Calu3 (cell line): ENCODE measurements at regions of chr7 and their contacts with region 1.

Region 1: DNA sequence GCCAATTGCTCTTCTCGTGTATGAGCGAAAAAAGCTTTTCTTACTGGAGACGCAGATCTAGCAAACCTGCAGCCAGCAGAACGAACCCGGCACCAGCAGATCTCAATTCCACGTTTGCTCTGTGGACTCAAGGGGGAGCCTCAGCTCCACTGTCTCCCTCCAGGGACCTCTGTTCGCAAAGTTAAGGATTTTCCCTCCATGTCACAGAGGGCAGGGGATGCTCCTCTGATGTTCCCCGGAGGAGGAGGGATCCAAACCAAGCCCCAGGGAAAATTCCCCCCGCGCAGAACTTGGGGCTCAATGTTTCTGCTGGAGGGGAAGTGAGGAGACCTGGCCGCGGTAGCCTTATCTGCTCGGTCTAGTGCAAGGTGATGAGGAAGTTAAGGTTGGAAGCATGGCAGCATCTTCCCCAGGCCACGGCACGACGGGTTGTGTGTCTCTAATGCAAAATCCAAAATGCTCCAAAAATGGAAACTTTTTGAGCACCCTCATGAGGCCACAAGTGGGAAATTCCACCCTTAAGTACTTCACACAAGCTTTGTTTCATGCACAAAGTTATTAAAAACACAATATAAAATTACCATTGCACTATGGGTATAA is 9.0 kb downstream of the IQCE start:
- DNase-seq: peak; percentile 30
- H3K4me3 Mint-ChIP-seq: no peak overlapping the region
- H3K27ac Mint-ChIP-seq: no peak overlapping the region
- H3K4me1 Mint-ChIP-seq: peaks cover 65% of the 10 kb centered on the region
- H3K27me3 Mint-ChIP-seq: no peaks in the 10 kb centered on the region
- CTCF ChIP-seq: peak; percentile 33

Region 2: DNA sequence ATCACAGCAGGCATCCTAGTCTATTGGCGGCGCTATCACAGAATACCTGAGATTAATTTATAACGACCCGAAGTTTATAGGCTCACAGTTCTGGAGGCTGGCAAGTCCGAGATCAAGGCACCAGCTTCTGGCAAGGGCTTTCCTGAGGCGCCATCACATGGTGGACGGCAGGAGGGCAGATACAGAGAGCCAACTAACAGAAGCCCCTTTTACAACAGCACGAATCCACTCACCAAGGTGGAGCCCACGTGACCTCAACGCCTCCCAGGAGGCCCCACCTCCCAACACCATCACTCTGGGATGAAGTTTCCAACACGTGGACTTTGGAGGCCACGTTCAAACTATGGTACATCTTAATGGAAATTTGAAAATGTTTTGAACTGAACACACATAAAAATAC is 642.4 kb before region 1 on chr7:
- CTCF ChIA-PET with region 1: no interaction called
- intact Hi-C with region 1: no loop called
- DNase-seq: no peak
- H3K4me3 Mint-ChIP-seq: no peak overlapping the region
- H3K27ac Mint-ChIP-seq: no peak overlapping the region
- H3K4me1 Mint-ChIP-seq: peaks cover 8% of the 10 kb centered on the region
- H3K27me3 Mint-ChIP-seq: no peaks in the 10 kb centered on the region
- CTCF ChIP-seq: no peak

Region 3: GRCh38 chr7:2451171-2452073 is 116.4 kb before region 1 on chr7:
- CTCF ChIA-PET with region 1: interaction called, 14 read pairs
- intact Hi-C with region 1: no loop called
- DNase-seq: peak; percentile 99
- H3K4me3 Mint-ChIP-seq: peak overlapping the region; percentile 50
- H3K27ac Mint-ChIP-seq: peak overlapping the region; percentile 53
- H3K4me1 Mint-ChIP-seq: peaks cover 13% of the 10 kb centered on the region
- H3K27me3 Mint-ChIP-seq: no peaks in the 10 kb centered on the region
- CTCF ChIP-seq: peak; percentile 99

Region 4: DNA sequence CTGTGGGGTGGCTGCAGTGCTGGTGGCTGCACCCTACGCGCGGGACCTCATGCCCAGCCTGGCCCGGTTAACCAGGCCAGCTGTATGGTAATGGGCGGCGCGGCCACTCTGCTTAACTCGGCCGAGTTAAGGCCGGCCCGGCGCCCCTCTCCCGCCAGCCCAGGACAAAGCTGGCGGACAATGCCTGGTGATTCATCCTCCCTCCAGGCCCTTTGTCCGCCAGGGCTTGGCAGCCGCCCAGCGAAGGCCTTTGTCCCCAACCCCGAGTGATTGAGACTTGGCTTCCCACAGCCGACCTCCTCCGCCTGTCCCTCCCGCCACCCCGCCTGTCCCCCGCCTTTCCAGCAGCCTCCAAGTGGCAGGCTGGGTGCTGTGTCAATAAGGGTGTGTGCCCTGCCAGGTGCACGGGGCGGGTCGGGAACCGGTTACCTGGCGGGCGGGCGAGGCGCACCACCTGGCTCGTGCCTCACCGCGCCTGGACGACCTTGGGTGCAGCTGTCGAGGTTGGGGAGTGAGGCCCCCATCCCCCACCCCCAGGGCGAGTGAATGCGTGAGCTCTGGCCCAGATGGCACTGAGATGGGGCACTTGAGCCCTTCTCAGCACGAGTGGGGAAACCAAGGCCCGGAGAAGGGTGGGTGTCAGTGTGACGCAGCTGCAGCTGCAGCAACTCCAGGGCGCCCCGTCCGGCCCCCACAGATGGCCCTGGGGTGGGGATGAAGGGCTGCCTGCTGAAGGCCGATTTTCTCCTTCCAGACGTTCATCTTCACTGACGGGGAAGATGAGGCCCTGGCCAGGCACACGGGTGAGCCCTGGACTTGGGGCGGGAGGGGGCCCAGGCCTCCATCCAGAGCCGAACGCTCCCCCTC is 43.6 kb before region 1 on chr7:
- CTCF ChIA-PET with region 1: interaction called, 8 read pairs
- intact Hi-C with region 1: loop called (anchors 5 kb)
- DNase-seq: peak; percentile 99
- H3K4me3 Mint-ChIP-seq: peak overlapping the region; percentile 99
- H3K27ac Mint-ChIP-seq: peak overlapping the region; percentile 77
- H3K4me1 Mint-ChIP-seq: peaks cover 46% of the 10 kb centered on the region
- H3K27me3 Mint-ChIP-seq: no peaks in the 10 kb centered on the region
- CTCF ChIP-seq: no peak

Region 5: DNA sequence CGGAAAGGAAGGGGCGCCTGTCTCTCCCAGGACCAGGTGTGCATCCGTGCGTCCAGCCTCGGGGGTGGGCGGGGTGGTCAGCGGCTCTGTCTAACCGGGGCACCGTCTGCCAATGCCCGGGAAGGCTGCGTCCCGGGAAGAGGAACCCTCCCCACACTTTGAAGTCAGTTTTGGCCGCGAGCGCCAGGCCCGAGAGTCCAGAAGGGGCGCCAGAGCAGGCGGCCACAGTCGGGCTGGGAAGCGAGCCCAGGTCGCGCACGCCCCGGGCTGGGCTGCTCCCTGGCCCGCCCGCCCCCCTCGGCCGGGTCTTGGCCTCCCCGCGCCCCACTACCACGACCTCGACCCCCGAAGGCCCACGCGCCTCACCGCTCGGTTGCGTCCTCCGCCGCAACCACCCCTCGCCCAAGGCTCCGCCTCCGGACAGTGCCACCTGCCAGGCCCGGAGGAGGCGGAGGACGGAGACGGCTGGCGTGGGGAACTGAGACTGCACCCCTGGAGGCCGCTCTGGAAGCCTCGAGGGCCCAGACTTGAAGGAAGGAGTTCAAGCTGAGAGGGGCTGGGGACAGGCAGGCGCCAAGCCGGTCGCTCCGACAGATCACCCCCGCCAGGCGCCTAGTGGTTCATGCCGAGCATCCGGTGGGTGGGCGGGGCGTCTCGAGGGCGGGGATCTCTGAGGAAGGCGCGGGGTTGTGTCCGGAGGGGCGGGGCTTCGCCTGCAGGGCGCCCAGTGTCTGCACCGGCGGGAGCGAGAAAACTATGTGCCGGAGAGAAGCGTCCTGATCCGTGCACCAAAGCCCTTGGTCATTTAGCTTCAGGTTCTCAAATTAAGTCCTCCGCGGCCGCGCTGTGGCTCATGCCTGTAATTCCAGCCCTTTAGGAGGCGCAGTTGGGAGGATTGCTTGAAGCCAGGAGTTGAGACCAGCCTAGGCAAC is 12.4 kb before region 1 on chr7 and contains the start of gene BRAT1:
- CTCF ChIA-PET with region 1: interaction called, 32 read pairs
- intact Hi-C with region 1: no loop called
- DNase-seq: peak; percentile 99
- H3K4me3 Mint-ChIP-seq: peak within 1 kb of the TSS; percentile 93
- H3K27ac Mint-ChIP-seq: peak within 1 kb of the TSS; percentile 93
- H3K4me1 Mint-ChIP-seq: peaks cover 38% of the 10 kb centered on the region
- H3K27me3 Mint-ChIP-seq: no peaks in the 10 kb centered on the region
- CTCF ChIP-seq: peak; percentile 71
- total RNA-seq, gene BRAT1: 56.2 and 59.6 TPM in 2 replicates

Region 6: GRCh38 chr7:2632733-2633537 is 65.2 kb after region 1 on chr7:
- CTCF ChIA-PET with region 1: interaction called, 7 read pairs
- intact Hi-C with region 1: loop called (anchors 5 kb)
- DNase-seq: peak; percentile 73
- H3K4me3 Mint-ChIP-seq: peak overlapping the region; percentile 99
- H3K27ac Mint-ChIP-seq: peak overlapping the region; percentile 86
- H3K4me1 Mint-ChIP-seq: peaks cover 44% of the 10 kb centered on the region
- H3K27me3 Mint-ChIP-seq: no peaks in the 10 kb centered on the region
- CTCF ChIP-seq: no peak

Region 7: DNA sequence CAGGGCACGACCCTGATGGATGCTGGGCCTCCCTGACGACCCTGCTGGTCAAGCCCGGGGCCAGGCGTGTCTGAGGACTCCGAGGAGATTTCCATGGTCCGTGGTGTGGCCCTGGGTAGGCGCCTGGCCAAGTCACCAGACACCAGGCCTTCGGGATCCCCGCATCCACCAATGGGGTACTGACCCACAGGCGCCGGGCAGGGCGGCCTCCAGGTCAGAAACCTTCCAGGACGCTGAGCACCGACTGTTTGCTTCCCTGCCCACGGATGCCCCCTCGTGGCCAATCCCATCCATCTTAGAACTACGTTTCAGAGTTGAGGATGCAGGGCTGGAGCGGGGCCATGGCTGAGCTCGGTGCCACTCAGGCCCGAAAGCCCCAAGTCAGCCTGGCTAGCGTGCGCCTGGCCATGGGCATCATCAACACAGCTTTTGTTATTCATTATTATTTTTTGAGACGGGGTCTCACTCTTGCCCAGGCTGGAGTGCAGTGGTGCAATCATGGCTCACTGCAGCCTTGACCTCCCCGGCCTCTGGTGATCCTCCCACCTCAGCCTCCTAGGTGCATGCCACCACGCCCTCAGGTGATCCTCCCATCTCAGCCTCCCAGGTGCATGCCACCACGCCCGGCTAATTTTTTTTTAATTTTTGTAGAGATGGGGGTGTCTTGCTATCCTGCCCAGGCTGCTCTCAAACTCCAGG is 113.2 kb after region 1 on chr7:
- CTCF ChIA-PET with region 1: interaction called, 5 read pairs
- intact Hi-C with region 1: loop called (anchors 10 kb)
- DNase-seq: peak; percentile 95
- H3K4me3 Mint-ChIP-seq: no peak overlapping the region
- H3K27ac Mint-ChIP-seq: no peak overlapping the region
- H3K4me1 Mint-ChIP-seq: peaks cover 9% of the 10 kb centered on the region
- H3K27me3 Mint-ChIP-seq: peaks cover 63% of the 10 kb centered on the region
- CTCF ChIP-seq: peak; percentile 94

Region 8: DNA sequence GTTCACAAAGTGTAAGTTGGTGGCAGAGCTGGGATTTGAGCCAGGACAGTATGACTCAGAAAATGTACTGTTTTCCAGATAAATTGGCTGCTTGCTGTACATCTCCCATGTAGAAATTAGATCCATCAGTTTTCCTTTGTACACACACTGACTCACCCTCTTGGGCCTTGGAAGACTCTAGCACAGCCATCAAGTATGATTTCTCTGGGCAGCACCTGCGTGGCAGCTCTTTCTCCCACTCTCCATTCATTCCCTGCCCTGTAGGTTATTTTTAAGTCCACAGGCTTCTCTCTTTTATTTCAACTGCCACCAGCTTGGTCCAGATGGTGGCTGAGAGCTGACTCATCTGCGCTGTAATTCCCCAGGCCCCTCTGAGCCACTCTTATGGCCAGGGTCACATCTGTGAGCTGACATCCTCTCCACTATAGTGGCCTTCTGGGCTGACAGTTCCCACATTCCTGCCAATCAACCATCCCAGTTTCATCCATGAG is 705.0 kb after region 1 on chr7:
- CTCF ChIA-PET with region 1: no interaction called
- intact Hi-C with region 1: no loop called
- DNase-seq: peak; percentile 9
- H3K4me3 Mint-ChIP-seq: no peak overlapping the region
- H3K27ac Mint-ChIP-seq: no peak overlapping the region
- H3K4me1 Mint-ChIP-seq: peaks cover 9% of the 10 kb centered on the region
- H3K27me3 Mint-ChIP-seq: no peaks in the 10 kb centered on the region
- CTCF ChIP-seq: no peak